PC-3 (cell line): ENCODE measurements at regions of chrX and their contacts with region 1.

Region 1: DNA sequence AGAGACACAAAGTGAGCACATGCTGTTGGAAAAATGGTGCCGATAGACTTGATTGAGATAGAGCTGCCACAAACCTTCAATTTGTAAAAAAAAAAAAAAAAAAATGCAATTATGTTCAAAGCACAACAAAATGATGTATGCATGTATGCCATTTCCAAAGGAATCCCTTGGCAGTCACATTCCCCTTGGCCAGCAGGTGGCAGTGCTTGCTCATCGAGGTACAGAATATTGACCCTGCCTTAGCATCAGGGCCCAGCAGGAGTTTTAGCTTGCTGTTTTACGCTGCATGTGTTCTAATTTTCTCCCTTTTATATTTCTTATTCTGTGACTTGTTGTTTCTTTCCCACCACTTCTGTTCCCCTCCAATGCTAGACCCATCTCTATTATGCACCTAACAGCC is 34.5 kb upstream of the CYBB start:
- DNase-seq: peak; percentile 84
- ATAC-seq: peak; percentile 89
- H3K4me3 ChIP-seq: no peak overlapping the region
- H3K27ac ChIP-seq: no peak overlapping the region
- H3K4me1 ChIP-seq: peaks cover 17% of the 10 kb centered on the region
- H3K27me3 ChIP-seq: no peaks in the 10 kb centered on the region
- CTCF ChIP-seq: peak; percentile 80

Region 2: GRCh38 chrX:37409278-37409677 is 336.1 kb before region 1 on chrX:
- CTCF ChIA-PET with region 1: no interaction called
- POLR2A ChIA-PET with region 1: no interaction called
- intact Hi-C with region 1: no loop called
- DNase-seq: no peak
- ATAC-seq: no peak
- H3K4me3 ChIP-seq: no peak overlapping the region
- H3K27ac ChIP-seq: no peak overlapping the region
- H3K4me1 ChIP-seq: no peaks in the 10 kb centered on the region
- H3K27me3 ChIP-seq: no peaks in the 10 kb centered on the region
- CTCF ChIP-seq: no peak

Region 3: GRCh38 chrX:37509349-37509748 is 236.0 kb before region 1 on chrX:
- CTCF ChIA-PET with region 1: no interaction called
- POLR2A ChIA-PET with region 1: no interaction called
- intact Hi-C with region 1: loop called (anchors 1 kb)
- DNase-seq: peak; percentile 28
- ATAC-seq: peak; percentile 71; the same call in 1 of the 2 replicates
- H3K4me3 ChIP-seq: no peak overlapping the region
- H3K27ac ChIP-seq: no peak overlapping the region
- H3K4me1 ChIP-seq: no peaks in the 10 kb centered on the region
- H3K27me3 ChIP-seq: no peaks in the 10 kb centered on the region
- CTCF ChIP-seq: peak; percentile 53; the same call in 1 of the 2 replicates

Region 4: GRCh38 chrX:37578045-37578444 is 167.3 kb before region 1 on chrX:
- CTCF ChIA-PET with region 1: no interaction called
- POLR2A ChIA-PET with region 1: no interaction called
- intact Hi-C with region 1: loop called (anchors 2 kb)
- DNase-seq: peak; percentile 45
- ATAC-seq: no peak; the same call in 1 of the 2 replicates
- H3K4me3 ChIP-seq: no peak overlapping the region
- H3K27ac ChIP-seq: no peak overlapping the region
- H3K4me1 ChIP-seq: peaks cover 6% of the 10 kb centered on the region
- H3K27me3 ChIP-seq: no peaks in the 10 kb centered on the region
- CTCF ChIP-seq: no peak

Region 5: DNA sequence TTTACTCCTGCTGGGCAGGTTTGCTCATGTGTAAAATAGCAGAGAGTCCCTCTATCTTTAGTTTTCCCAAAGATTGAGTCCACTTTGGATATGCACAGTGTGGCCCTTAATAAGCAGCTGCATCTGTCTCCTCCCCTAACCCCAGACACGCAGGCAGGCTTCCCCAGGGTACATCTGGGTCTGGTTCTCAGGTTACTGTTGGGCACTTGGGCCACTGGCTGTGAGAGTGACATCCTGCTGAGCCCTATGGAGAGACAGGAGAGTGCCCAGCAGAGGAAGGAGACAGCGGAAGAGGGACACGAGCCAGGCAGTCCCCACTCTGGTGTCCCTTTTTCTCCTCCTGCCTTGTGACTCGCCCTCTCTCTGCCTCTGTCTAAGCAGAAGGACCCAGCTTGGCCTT is 43.8 kb before region 1 on chrX:
- CTCF ChIA-PET with region 1: no interaction called
- POLR2A ChIA-PET with region 1: no interaction called
- intact Hi-C with region 1: no loop called
- DNase-seq: no peak
- ATAC-seq: no peak
- H3K4me3 ChIP-seq: no peak overlapping the region
- H3K27ac ChIP-seq: no peak overlapping the region
- H3K4me1 ChIP-seq: no peaks in the 10 kb centered on the region
- H3K27me3 ChIP-seq: no peaks in the 10 kb centered on the region
- CTCF ChIP-seq: no peak

Region 6: DNA sequence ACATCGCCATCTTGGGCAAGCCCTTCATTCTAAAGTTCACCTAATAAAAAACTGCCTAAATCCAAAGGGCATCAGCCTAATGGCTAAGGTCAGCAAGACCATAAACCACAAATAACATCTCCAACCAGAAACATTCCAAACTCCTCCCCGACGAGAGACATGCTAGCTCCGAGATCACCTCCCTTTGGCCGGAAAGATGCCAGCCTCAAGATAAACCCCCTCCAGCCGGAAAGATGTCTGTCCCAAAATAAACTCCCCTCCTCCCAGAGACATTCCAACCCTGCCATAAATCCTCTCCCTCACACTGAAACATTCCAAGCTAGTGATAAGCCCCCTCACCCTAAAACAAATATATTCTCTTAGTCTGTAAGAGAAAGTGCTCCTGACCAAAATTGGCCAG is 115.4 kb after region 1 on chrX:
- CTCF ChIA-PET with region 1: no interaction called
- POLR2A ChIA-PET with region 1: no interaction called
- intact Hi-C with region 1: no loop called
- DNase-seq: no peak
- ATAC-seq: no peak
- H3K4me3 ChIP-seq: no peak overlapping the region
- H3K27ac ChIP-seq: no peak overlapping the region
- H3K4me1 ChIP-seq: no peaks in the 10 kb centered on the region
- H3K27me3 ChIP-seq: no peaks in the 10 kb centered on the region
- CTCF ChIP-seq: no peak

Region 7: DNA sequence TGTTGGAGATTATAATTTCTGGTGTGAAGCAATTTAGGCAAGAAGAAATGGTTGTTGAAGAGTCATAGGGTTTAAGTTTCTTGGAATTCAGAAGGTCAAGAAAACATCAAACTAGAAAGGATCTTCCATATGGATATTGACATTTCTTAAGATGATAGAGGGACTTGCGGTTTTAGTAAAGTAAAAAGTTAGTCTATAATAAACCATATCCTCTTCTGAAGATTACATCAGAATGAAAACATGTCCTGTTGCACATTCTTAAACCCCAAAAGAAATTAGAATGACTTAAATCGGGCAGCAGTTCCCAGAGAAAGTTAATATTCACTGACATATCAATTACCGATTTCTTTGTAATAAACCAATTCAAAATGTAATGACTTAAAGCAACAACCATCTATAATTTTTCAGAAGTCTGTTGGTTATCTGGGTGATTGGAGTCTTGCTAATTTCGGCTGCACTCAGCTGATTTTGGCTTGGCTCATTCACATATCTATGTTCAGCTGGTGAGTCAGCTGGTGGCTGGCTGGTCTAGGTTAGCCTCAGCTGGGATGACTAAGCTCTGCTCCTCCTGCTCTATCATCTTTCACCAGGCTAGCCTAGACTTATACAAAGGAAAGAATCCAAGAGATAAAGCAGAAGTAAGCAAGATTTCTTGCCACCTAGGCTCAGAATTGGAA is 126.4 kb after region 1 on chrX:
- CTCF ChIA-PET with region 1: no interaction called
- POLR2A ChIA-PET with region 1: no interaction called
- intact Hi-C with region 1: no loop called
- DNase-seq: peak; percentile 88
- ATAC-seq: peak; percentile 97
- H3K4me3 ChIP-seq: peak overlapping the region; percentile 13; the same call in 1 of the 2 replicates
- H3K27ac ChIP-seq: peak overlapping the region; percentile 97
- H3K4me1 ChIP-seq: peaks cover 30% of the 10 kb centered on the region
- H3K27me3 ChIP-seq: no peaks in the 10 kb centered on the region
- CTCF ChIP-seq: no peak

Region 8: DNA sequence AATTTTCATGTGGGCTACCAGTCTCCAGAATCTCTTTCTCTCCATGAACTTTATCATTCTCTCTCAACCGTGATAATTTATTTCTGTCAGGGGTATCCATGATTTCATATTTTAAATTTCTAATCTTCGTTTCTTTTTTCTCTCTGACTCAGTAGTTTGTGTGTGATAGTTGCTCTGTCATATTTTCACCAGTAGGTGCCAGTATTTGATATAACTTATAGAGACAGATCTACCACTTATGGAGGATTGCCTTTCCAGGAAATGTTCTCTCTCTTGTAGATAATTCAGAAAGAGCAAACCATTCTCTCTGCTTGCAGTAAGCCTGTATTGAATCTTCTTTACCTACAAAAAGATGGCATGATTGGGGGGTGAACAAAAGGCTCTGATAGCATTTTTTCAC is 181.3 kb after region 1 on chrX:
- CTCF ChIA-PET with region 1: interaction called, 3 read pairs
- POLR2A ChIA-PET with region 1: no interaction called
- intact Hi-C with region 1: loop called (anchors 1 kb)
- DNase-seq: peak; percentile 69
- ATAC-seq: peak; percentile 39; the same call in 1 of the 2 replicates
- H3K4me3 ChIP-seq: no peak overlapping the region
- H3K27ac ChIP-seq: no peak overlapping the region
- H3K4me1 ChIP-seq: peaks cover 14% of the 10 kb centered on the region
- H3K27me3 ChIP-seq: no peaks in the 10 kb centered on the region
- CTCF ChIP-seq: peak; percentile 80

Region 9: GRCh38 chrX:38166478-38167083 is 421.2 kb after region 1 on chrX:
- CTCF ChIA-PET with region 1: interaction called, 3 read pairs
- POLR2A ChIA-PET with region 1: no interaction called
- intact Hi-C with region 1: loop called (anchors 2 kb)
- DNase-seq: peak; percentile 65
- ATAC-seq: no peak
- H3K4me3 ChIP-seq: no peak overlapping the region
- H3K27ac ChIP-seq: no peak overlapping the region
- H3K4me1 ChIP-seq: no peaks in the 10 kb centered on the region
- H3K27me3 ChIP-seq: no peaks in the 10 kb centered on the region
- CTCF ChIP-seq: peak; percentile 78

Region 10: GRCh38 chrX:38175140-38175539 is 429.8 kb after region 1 on chrX:
- CTCF ChIA-PET with region 1: no interaction called
- POLR2A ChIA-PET with region 1: no interaction called
- intact Hi-C with region 1: loop called (anchors 1 kb)
- DNase-seq: peak; percentile 66
- ATAC-seq: peak; percentile 93
- H3K4me3 ChIP-seq: no peak overlapping the region
- H3K27ac ChIP-seq: no peak overlapping the region
- H3K4me1 ChIP-seq: no peaks in the 10 kb centered on the region
- H3K27me3 ChIP-seq: no peaks in the 10 kb centered on the region
- CTCF ChIP-seq: peak; percentile 77